ENCODE measurements at regions of chr19 and their contacts with region 1.

Region 1: DNA sequence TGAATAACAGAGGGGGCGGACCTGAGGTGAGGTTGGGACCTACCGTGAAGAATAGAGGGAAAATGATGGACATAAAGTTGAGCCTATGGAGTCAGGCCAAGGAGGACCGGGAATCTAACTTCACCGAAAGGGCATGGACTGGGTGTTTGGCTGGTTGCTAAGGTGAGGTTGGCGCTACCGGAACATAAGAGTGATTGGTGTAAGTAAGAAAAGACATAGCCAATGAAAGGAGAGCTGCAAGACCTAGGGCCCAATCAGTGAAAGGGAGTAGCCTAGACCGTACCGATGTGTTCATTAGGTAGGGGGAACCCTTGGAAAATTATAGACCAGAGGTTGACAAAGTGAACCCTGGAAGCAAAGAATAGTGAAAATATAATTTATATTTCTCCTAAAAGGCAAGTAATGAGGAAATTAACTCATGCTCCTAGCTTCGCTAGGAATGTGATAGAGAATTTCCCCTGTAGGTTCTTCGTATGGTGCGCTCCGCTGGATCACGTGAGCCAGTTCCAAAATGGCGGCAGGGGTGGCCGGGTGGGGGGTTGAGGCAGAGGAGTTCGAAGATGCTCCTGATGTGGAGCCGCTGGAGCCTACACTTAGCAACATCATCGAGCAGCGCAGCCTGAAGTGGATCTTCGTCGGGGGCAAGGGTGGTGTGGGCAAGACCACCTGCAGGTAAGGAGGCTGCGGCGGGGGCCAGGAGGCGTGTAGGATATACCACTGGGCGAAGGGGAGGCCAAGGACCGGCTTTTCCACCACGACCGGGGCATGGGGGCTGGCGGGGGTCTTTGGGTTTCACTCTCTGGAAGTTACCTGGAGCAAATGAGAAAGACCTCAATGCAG is at the start of gene GET3:
- DNase-seq: peak; percentile 100
- H3K4me3 ChIP-seq: peak within 1 kb of the TSS; percentile 93
- CTCF ChIP-seq: no peak

Region 2: GRCh38 chr19:12722566-12723380 is 14.4 kb before region 1 on chr19:
- CTCF ChIA-PET with region 1: interaction called, 31 read pairs
- POLR2A ChIA-PET with region 1: interaction called, 9 read pairs
- DNase-seq: peak; percentile 95
- H3K4me3 ChIP-seq: peak overlapping the region; percentile 80
- CTCF ChIP-seq: no peak

Measured in AG04449 (cell line).